ENCODE measurements at regions of chr5 and their contacts with region 1.

Region 1: GRCh38 chr5:95781101-95781583 is 41.4 kb downstream of the GLRX start:
- DNase-seq: peak; percentile 38 to 85 (median 64)
- ATAC-seq: peak; percentile 93 to 98 (median 96)
- H3K4me3 ChIP-seq: no peak overlapping the region
- H3K4me3 Mint-ChIP-seq: peak overlapping the region; percentile 31 to 60 (median 52)
- H3K27ac ChIP-seq: no peak overlapping the region
- H3K27ac Mint-ChIP-seq: peak overlapping the region in 1 of 2 donors; percentile 22
- H3K4me1 ChIP-seq: peaks cover 0 to 10% of the 10 kb centered on the region in 2 experiments
- H3K4me1 Mint-ChIP-seq: peaks cover 9 to 19% (median 15%) of the 10 kb centered on the region in 3 donors
- H3K27me3 ChIP-seq: no peaks in the 10 kb centered on the region
- H3K27me3 Mint-ChIP-seq: no peaks in the 10 kb centered on the region

Region 2: GRCh38 chr5:95664204-95664786 is 116.8 kb before region 1 on chr5:
- CTCF ChIA-PET with region 1: interaction called, 11 to 16 read pairs
- POLR2A ChIA-PET with region 1: interaction called in 1 of 2 experiments, 4 read pairs
- DNase-seq: peak in 19 of 35 experiments; percentile 4 to 64 (median 24)
- ATAC-seq: no peak
- H3K4me3 ChIP-seq: no peak overlapping the region
- H3K4me3 Mint-ChIP-seq: no peak overlapping the region
- H3K27ac ChIP-seq: no peak overlapping the region
- H3K27ac Mint-ChIP-seq: no peak overlapping the region
- H3K4me1 ChIP-seq: peaks cover 0 to 5% of the 10 kb centered on the region in 2 experiments
- H3K4me1 Mint-ChIP-seq: peaks cover 0 to 3% (median 0%) of the 10 kb centered on the region in 3 donors
- H3K27me3 ChIP-seq: no peaks in the 10 kb centered on the region
- H3K27me3 Mint-ChIP-seq: no peaks in the 10 kb centered on the region

Region 3: GRCh38 chr5:95794070-95794516 is 13.0 kb after region 1 on chr5:
- CTCF ChIA-PET with region 1: interaction called, 6 to 21 read pairs
- POLR2A ChIA-PET with region 1: interaction called in 1 of 2 experiments, 6 read pairs
- DNase-seq: no peak
- ATAC-seq: no peak
- H3K4me3 ChIP-seq: no peak overlapping the region
- H3K4me3 Mint-ChIP-seq: no peak overlapping the region
- H3K27ac ChIP-seq: no peak overlapping the region
- H3K27ac Mint-ChIP-seq: no peak overlapping the region
- H3K4me1 ChIP-seq: no peaks in the 10 kb centered on the region
- H3K4me1 Mint-ChIP-seq: no peaks in the 10 kb centered on the region
- H3K27me3 ChIP-seq: no peaks in the 10 kb centered on the region
- H3K27me3 Mint-ChIP-seq: no peaks in the 10 kb centered on the region

Region 4: DNA sequence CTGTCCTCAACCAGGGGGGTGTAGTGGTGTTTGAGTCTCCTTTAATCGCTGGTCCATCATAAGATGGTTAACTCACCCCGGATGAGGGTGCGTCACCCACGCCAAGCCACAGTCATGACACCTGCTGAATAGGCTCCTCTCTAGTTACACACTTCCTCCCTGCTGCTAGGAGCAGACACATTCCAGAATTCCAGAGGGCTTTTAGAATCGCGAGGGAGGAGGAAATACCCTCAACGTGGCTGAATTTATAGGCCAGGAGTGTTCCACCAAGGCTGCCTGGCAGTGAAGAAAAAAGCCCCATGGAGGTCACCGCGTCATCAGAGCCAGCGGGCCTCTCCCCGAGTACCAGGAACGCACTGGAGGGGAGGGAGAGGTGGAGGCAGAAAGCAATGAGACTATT is 36.3 kb after region 1 on chr5:
- CTCF ChIA-PET with region 1: interaction called, 4 to 14 read pairs
- POLR2A ChIA-PET with region 1: no interaction called
- DNase-seq: peak in 20 of 35 experiments; percentile 14 to 55 (median 33)
- ATAC-seq: peak in 3 of 4 experiments; percentile 15 to 32 (median 17)
- H3K4me3 ChIP-seq: peak overlapping the region; percentile 39 to 72
- H3K4me3 Mint-ChIP-seq: peak overlapping the region; percentile 98 to 99 (median 98)
- H3K27ac ChIP-seq: peak overlapping the region; percentile 86
- H3K27ac Mint-ChIP-seq: peak overlapping the region; percentile 91 to 97
- H3K4me1 ChIP-seq: peaks cover 47 to 64% of the 10 kb centered on the region in 2 experiments
- H3K4me1 Mint-ChIP-seq: peaks cover 79 to 82% (median 80%) of the 10 kb centered on the region in 3 donors
- H3K27me3 ChIP-seq: no peaks in the 10 kb centered on the region
- H3K27me3 Mint-ChIP-seq: no peaks in the 10 kb centered on the region

Region 5: DNA sequence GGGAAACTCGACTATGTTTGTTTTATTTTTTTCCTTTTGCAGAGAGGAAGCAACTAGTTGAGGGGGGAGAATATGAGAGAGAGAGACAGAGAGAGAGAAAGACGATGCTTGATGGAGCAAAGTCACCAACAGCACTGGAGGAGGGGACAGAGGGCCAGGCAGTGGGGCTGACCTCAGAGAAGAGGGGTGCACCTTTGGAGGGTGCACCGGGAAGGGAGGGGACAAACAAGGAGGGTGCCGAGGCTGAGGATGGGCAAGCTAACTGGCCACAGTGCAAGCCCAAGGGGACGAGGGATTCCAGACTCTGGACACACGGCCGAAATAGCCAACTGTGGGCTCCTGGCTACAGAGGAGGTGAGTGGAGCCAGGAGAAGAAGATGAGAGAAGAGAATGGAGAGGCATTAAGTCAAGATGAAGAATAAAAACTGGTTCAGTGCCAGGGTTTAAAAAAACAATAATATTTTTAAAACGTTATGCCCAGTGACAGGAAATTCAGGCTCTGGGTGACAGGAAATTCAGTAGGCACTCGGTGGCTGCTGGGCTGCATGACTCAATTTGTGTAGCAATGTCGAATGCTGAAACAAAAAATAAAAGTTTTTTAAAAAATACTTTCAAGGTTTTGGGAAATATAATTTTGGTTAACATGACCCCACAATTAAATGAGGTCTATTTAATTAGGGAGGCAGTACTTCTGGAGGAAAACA is 54.7 kb after region 1 on chr5:
- CTCF ChIA-PET with region 1: interaction called, 15 to 19 read pairs
- POLR2A ChIA-PET with region 1: interaction called in 1 of 2 experiments, 3 read pairs
- DNase-seq: peak in 12 of 35 experiments; percentile 16 to 58 (median 33)
- ATAC-seq: peak in 3 of 4 experiments; percentile 51 to 57 (median 57)
- H3K4me3 ChIP-seq: peak overlapping the region; percentile 53 to 76
- H3K4me3 Mint-ChIP-seq: peak overlapping the region; percentile 82 to 87 (median 84)
- H3K27ac ChIP-seq: peak overlapping the region; percentile 88
- H3K27ac Mint-ChIP-seq: peak overlapping the region; percentile 94 to 95
- H3K4me1 ChIP-seq: peaks cover 20 to 24% of the 10 kb centered on the region in 2 experiments
- H3K4me1 Mint-ChIP-seq: peaks cover 57 to 62% (median 58%) of the 10 kb centered on the region in 3 donors
- H3K27me3 ChIP-seq: no peaks in the 10 kb centered on the region
- H3K27me3 Mint-ChIP-seq: no peaks in the 10 kb centered on the region

Region 6: DNA sequence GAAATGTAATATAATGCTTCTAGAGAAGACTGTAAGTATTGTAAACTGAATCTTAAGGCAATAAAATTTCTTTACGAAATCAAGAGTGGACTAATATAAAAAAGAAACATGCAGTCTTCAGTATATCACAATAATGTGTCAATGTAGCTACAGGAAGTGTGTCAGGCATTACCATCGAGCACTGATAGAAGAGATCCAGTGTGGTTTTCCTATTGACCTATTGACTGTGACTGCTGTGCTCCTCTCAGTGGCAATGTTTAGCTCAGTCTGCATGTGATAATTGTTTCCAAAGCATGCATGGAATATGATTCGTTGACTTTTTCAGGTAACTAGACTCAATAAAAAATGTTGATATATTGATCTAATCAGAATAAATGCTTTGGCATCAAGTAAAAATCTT is 672.3 kb after region 1 on chr5:
- CTCF ChIA-PET with region 1: interaction called in 1 of 2 experiments, 11 read pairs
- POLR2A ChIA-PET with region 1: no interaction called
- DNase-seq: no peak
- ATAC-seq: peak in 1 of 4 experiments; percentile 32
- H3K4me3 ChIP-seq: no peak overlapping the region
- H3K4me3 Mint-ChIP-seq: no peak overlapping the region
- H3K27ac ChIP-seq: no peak overlapping the region
- H3K27ac Mint-ChIP-seq: no peak overlapping the region
- H3K4me1 ChIP-seq: no peaks in the 10 kb centered on the region
- H3K4me1 Mint-ChIP-seq: peaks cover 0 to 4% (median 4%) of the 10 kb centered on the region in 3 donors
- H3K27me3 ChIP-seq: no peaks in the 10 kb centered on the region
- H3K27me3 Mint-ChIP-seq: peaks cover 2 to 3% of the 10 kb centered on the region in 2 donors

Measured in T-cell (primary cell).